ENCODE measurements at regions of chr19 and their contacts with region 1.

Region 1: DNA sequence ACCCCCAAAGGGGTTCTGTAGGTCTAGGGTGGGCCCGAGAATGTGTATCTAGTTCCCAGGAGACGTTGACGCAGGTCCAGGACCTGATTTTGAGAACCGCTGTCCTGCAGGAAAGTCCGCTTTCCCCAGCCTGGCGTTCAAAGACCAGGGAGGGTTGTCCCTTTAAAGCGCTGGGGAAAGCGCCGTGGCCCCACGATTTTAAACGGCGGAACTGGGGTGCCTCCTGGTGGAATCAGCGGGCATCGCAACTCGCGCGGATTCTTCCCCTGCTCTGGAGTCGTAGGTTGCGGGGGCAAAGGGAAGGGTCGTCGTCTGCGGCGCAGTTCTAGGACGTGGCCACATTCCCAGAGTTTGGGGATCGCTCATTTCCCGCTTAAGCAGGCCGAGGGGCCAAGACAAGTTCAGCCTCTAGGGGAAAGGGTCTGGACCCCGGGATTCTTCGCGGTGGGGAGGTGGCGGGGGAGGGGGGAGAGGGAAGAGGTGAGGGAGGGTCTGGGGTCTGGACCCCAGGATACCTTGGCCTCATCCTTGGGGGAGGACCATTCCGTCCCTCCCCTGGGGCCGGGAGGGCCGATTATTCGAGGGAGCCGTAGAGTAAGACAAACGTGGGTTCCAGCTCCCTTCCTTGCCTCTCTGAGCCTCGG is 7.7 kb downstream of the PNMA8B start:
- DNase-seq: peak; percentile 77
- ATAC-seq: peak; percentile 67
- H3K4me3 Mint-ChIP-seq: no peak overlapping the region
- H3K27ac Mint-ChIP-seq: no peak overlapping the region
- H3K4me1 Mint-ChIP-seq: no peaks in the 10 kb centered on the region
- H3K27me3 Mint-ChIP-seq: peaks cover 80% of the 10 kb centered on the region

Region 2: DNA sequence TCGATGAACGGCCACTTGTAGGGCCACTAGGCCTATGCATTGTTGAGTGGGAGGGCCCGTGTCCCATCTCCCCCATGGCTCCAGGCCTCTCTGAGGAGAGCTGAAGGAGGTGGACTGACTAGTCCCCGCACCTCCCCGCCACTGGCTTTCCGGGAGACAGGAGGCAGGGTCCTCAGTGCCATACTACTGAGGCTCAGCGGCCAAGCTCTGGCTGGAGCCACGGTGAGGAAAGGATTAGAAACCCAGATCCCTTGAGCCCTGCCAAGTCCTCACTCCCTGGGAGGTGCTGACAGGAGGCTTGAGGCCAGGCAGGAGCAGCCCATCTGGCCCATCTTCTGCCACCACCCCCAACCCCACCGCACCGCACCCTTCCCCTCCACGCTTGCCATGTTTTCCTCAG is 103.5 kb before region 1 on chr19:
- CTCF ChIA-PET with region 1: no interaction called
- DNase-seq: no peak
- ATAC-seq: no peak
- H3K4me3 Mint-ChIP-seq: no peak overlapping the region
- H3K27ac Mint-ChIP-seq: no peak overlapping the region
- H3K4me1 Mint-ChIP-seq: no peaks in the 10 kb centered on the region
- H3K27me3 Mint-ChIP-seq: no peaks in the 10 kb centered on the region

Region 3: GRCh38 chr19:46404055-46404752 is 83.7 kb before region 1 on chr19:
- CTCF ChIA-PET with region 1: interaction called, 71 read pairs
- DNase-seq: no peak
- ATAC-seq: no peak
- H3K4me3 Mint-ChIP-seq: no peak overlapping the region
- H3K27ac Mint-ChIP-seq: no peak overlapping the region
- H3K4me1 Mint-ChIP-seq: peaks cover 11% of the 10 kb centered on the region
- H3K27me3 Mint-ChIP-seq: peaks cover 63% of the 10 kb centered on the region